ENCODE measurements at regions of chr11 and their contacts with region 1.

Region 1: DNA sequence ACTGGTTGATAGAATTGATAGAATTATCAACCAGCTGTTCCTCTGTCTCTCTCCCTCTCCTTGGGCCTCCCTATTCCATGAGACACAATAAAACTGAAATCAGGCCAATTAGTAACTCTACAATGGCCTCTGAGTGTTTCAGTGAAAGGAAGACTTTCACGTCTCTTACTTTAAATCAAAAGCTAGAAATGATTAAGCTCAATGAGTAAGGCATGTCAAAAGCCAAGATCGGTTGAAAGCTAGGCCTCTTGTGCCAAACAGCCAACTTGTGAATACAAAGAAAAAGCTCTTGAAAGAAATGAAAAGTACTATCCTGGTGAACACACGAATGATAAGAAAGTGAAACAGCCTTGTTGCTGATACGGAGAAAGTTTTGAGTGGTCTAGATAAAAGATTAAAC is 16.6 kb downstream of the PIH1D2 start:
- DNase-seq: peak; percentile 29
- H3K4me3 Mint-ChIP-seq: peak overlapping the region; percentile 33
- H3K27ac Mint-ChIP-seq: peak overlapping the region; percentile 69
- H3K4me1 Mint-ChIP-seq: peaks cover 23% of the 10 kb centered on the region
- H3K27me3 Mint-ChIP-seq: no peaks in the 10 kb centered on the region

Region 2: DNA sequence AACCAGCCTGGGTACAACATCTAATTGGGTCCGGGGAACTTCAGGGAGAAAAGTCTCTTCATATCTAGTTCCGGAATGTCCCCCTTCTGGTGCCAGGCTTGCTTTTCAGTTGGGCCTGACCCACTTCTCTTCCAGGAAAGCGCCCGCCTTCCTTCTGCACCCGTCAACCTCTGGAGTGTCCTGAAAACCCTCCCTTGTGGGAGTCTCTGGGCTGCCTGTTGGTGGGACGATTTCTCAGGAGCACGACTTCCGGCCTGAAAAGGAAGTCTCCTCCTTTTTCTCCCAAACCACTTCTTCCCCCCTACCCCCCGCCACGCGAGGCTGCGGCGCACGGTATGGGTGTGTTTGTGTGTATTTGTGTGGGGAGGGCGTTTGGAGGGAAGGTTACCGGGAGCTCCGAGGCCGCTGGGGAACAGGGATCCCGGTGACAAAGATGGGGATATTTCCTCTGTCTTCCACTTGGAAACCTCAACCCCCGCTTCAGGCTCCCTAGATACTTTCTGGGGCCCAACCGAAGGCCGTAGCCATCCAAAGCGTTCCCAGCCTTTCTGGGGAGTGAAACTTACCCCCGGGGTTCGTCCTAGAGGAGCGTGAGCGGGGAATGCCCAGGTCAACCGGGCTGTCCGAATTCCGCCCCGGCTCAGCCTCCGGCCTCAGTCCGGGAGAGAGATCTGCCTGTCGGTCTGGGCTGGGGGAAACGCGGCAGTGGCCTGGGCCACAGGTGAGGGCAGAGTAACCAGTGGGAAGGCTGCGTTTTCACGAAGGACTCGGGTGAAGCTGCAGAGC is 17.0 kb after region 1 on chr11 and contains the start of gene NKAPD1:
- CTCF ChIA-PET with region 1: interaction called, 3 read pairs
- POLR2A ChIA-PET with region 1: interaction called, 4 read pairs
- intact Hi-C with region 1: loop called (anchors 2 kb)
- DNase-seq: peak; percentile 87
- H3K4me3 Mint-ChIP-seq: peak within 1 kb of the TSS; percentile 93
- H3K27ac Mint-ChIP-seq: peak within 1 kb of the TSS; percentile 94
- H3K4me1 Mint-ChIP-seq: peaks cover 29% of the 10 kb centered on the region
- H3K27me3 Mint-ChIP-seq: peaks cover 1% of the 10 kb centered on the region
- total RNA-seq, gene NKAPD1: 17.5 to 19.4 TPM

Region 3: DNA sequence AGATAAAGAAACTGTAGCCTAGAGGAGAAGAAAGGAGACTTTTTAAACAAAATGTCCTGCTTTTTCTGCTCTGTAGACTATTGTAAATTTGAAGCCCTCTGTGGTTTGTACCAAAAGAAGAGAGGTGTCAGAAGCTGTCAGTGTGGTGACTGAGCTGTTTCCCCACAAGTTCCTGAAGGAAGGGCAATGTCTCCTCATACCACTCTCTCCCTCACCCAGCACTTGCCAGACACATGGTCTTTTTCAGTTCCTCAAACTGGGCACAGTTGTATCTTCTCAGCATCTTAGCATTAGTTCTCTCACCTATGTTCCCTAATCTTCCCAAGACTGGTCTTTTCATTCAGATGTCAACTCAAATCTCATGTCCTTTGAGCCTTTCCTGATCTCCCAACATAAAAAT is 122.4 kb after region 1 on chr11:
- CTCF ChIA-PET with region 1: no interaction called
- POLR2A ChIA-PET with region 1: no interaction called
- intact Hi-C with region 1: no loop called
- DNase-seq: no peak
- H3K4me3 Mint-ChIP-seq: no peak overlapping the region
- H3K27ac Mint-ChIP-seq: no peak overlapping the region
- H3K4me1 Mint-ChIP-seq: peaks cover 8% of the 10 kb centered on the region
- H3K27me3 Mint-ChIP-seq: peaks cover 23% of the 10 kb centered on the region

Region 4: GRCh38 chr11:112248201-112248600 is 191.0 kb after region 1 on chr11:
- CTCF ChIA-PET with region 1: no interaction called
- POLR2A ChIA-PET with region 1: no interaction called
- intact Hi-C with region 1: no loop called
- DNase-seq: no peak
- H3K4me3 Mint-ChIP-seq: no peak overlapping the region
- H3K27ac Mint-ChIP-seq: no peak overlapping the region
- H3K4me1 Mint-ChIP-seq: no peaks in the 10 kb centered on the region
- H3K27me3 Mint-ChIP-seq: no peaks in the 10 kb centered on the region